ENCODE measurements at regions of chr17 and their contacts with region 1.

Region 1: GRCh38 chr17:45385331-45385997 is 47.2 kb downstream of the ARHGAP27 start:
- DNase-seq: peak; percentile 88
- CTCF ChIP-seq: peak; percentile 95

Region 2: DNA sequence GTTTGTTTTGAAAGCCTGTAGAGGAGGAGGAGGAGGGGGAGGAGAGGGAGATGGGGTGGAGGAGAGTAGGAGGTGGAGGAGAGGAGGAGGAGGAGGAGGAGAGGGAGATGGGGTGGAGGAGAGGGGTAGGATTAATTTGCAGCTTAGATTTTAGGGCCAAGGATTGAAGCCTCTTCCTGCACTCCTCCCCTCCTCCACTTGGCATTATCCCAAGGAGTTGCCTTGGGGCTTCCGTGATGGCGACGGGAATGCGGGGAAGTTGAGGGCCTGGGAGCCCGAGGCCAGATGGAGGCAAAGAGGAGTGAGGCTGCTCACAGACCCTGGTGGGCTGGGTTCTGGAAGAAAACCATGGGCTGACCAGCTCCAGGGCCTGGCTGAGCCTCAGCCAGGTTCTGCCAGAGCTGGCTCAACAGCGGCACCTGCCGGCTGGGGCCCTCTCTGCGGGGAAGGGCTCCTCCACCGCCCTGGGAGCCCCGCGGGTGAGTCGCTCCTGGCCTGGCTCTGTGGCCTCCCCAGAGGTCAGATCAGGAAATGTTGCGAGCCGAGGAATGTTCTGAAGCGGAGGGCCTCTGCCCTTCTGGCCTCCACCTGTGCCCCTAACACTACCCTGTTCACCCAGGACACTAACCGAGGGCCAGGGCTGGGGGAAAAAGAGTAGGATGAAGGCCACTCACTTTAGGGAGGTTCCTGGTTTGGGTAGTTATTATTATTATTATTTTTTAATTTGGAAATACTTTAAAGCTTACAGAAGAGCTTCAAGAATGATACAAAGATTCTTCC is 187.7 kb before region 1 on chr17:
- in situ Hi-C with region 1: no loop called
- DNase-seq: peak; percentile 85
- CTCF ChIP-seq: peak; percentile 99

Region 3: GRCh38 chr17:45277216-45277849 is 108.1 kb before region 1 on chr17:
- in situ Hi-C with region 1: loop called (anchors 5 kb)
- DNase-seq: peak; percentile 88
- CTCF ChIP-seq: peak; percentile 91